ENCODE measurements at regions of chr22 and their contacts with region 1.

Region 1: DNA sequence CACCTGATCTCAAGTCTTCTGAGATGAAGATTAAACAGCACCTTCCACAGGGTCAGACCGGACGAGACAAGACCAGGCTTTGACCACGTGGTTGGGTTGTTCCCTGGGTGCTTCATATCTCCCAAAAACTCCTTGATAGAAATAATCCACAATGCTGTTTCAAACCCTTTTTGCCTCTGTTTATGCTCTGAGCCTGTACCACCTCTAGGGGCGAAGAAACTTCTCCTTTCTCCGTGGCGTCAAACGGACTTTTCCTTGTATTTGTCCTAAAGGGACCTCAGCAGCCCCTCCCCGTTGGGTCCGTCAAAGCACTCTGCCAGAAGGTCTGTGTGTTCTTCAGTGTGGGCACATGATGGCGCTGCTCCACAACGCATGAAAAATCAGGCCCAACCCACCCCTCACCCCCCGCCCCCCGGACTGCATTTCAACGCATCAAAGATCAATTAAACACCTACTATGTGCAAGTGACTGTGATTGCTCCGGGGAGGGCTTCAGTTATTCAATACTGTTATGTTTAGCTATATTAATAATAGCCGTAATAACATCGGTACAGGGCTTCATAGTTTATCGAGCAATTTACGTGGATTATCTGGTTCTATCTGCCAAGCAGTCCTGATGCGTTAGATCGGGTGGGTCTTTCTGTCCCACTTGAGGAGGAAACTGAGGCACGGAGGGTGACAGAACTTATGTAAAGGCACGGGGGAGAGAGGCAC is 17.3 kb upstream of the EIF3D start:
- DNase-seq: peak; percentile 75 to 80 (median 78)
- ATAC-seq: peak; percentile 93
- H3K4me3 ChIP-seq: no peak overlapping the region
- H3K27ac ChIP-seq: peak overlapping the region; percentile 62; the same call in 1 of the 3 replicates
- H3K4me1 ChIP-seq: peaks cover 5 to 15% of the 10 kb centered on the region in 2 experiments; a peak in 4 of 5 replicates
- H3K27me3 ChIP-seq: peaks cover 2 to 9% of the 10 kb centered on the region in 2 experiments; a peak in 3 of 5 replicates
- CTCF ChIP-seq: peak; percentile 61 to 68 (median 63); a peak in 5 of 6 replicates
- EP300 ChIP-seq: 0 out of 2 replicates have a peak, but pooled peaks have one; percentile 3
- POLR2A ChIP-seq: no peak
- RAD21 ChIP-seq: peak; percentile 31 to 51

Region 2: DNA sequence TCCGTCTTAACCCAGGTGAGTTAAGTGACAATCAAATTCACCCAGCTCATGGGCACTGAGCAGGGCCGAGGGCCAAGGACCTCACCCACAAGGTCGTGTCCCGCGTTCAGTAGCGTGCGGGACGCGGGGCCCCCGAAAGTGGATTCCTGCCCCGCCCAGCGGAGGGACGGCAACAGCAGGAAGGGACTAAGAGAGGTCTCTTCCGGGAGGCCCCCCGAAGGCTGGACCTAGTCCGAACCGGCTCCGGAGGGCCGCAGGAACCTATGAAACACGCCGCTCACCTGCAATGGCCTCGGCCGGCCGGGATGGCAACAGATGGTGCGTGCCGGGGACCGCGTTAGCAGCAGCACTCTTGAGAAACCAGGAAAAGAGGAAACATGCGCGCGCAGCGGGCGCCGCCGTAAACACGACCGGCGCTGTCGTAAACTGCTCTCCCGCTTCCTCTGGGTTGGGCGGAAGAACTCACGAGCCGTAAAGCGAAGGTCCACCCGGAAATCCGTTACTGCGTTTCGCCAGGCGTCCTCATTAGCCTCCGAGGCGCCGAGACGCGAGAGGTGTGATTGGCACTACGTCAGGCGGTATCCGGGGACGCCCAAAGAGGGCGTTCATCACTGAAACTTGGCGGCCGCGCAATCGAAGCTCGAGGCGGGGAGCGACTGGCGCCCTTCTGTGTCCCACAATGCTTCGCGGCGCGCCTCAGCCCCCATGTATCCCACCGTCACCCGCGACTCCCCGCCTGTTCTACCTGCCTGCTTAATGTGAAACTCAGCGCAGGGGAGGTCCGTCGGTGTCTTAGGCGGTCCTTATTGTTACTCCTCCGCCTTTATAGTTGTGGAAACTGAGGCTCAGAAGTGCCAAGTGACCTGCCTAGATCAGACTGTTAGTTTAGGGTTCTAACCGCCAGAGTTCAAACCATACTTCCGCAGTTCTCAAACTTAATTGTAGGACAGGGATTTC is 17.2 kb before region 1 on chr22 and contains the start of gene EIF3D:
- CTCF ChIA-PET with region 1: no interaction called
- POLR2A ChIA-PET with region 1: interaction called, 11 read pairs
- in situ Hi-C with region 1: no loop called
- intact Hi-C with region 1: no loop called
- DNase-seq: peak; percentile 78 to 98 (median 82)
- ATAC-seq: peak; percentile 96
- H3K4me3 ChIP-seq: peak within 1 kb of the TSS; percentile 99
- H3K27ac ChIP-seq: peak within 1 kb of the TSS; percentile 98
- H3K4me1 ChIP-seq: peaks cover 3 to 4% of the 10 kb centered on the region in 2 experiments; a peak in 3 of 5 replicates
- H3K27me3 ChIP-seq: no peaks in the 10 kb centered on the region
- CTCF ChIP-seq: peak in 2 of 3 experiments; percentile 8 to 14; a peak in 1 of 6 replicates
- EP300 ChIP-seq: no peak; the same call in 1 of the 2 replicates
- POLR2A ChIP-seq: peak; percentile 95
- RAD21 ChIP-seq: no peak
- polyA plus RNA-seq, gene EIF3D: 199 to 351 TPM

Region 3: DNA sequence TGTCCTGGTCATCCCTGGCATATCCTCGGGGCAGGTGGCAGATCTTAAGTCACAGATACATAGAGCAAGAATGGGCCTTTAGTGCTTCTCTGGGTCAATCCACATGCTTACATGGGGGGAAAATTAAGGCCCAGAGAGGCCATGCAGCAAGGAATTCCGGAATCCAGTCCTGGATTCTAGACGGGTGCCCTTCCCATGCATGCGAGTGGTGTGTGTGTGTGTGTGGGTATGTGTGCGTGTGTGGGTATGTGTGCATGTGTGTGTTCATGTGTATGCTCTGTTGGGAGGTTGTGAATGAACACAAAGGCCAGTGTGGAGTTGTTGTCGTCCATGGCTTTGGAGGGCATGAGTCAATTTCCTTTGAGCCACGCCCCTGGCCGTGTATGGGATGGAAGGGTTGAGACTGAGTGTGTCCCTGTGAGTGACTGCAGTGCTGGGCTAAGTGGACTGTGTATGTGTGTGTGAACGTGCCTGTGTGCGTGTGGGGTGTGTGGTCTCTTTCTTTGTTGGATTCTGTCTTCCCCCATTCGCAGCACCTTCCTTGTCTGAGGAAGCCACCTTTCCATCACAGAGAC is 16.1 kb after region 1 on chr22:
- CTCF ChIA-PET with region 1: no interaction called
- POLR2A ChIA-PET with region 1: no interaction called
- in situ Hi-C with region 1: no loop called
- intact Hi-C with region 1: no loop called
- DNase-seq: peak in 3 of 4 experiments; percentile 16 to 27 (median 20)
- ATAC-seq: peak; percentile 65
- H3K4me3 ChIP-seq: no peak overlapping the region
- H3K27ac ChIP-seq: no peak overlapping the region
- H3K4me1 ChIP-seq: peaks cover 0 to 12% of the 10 kb centered on the region in 2 experiments; a peak in 4 of 5 replicates
- H3K27me3 ChIP-seq: peaks cover 12 to 27% of the 10 kb centered on the region in 2 experiments; a peak in 3 of 5 replicates
- CTCF ChIP-seq: no peak
- EP300 ChIP-seq: no peak
- POLR2A ChIP-seq: no peak
- RAD21 ChIP-seq: no peak

Region 4: DNA sequence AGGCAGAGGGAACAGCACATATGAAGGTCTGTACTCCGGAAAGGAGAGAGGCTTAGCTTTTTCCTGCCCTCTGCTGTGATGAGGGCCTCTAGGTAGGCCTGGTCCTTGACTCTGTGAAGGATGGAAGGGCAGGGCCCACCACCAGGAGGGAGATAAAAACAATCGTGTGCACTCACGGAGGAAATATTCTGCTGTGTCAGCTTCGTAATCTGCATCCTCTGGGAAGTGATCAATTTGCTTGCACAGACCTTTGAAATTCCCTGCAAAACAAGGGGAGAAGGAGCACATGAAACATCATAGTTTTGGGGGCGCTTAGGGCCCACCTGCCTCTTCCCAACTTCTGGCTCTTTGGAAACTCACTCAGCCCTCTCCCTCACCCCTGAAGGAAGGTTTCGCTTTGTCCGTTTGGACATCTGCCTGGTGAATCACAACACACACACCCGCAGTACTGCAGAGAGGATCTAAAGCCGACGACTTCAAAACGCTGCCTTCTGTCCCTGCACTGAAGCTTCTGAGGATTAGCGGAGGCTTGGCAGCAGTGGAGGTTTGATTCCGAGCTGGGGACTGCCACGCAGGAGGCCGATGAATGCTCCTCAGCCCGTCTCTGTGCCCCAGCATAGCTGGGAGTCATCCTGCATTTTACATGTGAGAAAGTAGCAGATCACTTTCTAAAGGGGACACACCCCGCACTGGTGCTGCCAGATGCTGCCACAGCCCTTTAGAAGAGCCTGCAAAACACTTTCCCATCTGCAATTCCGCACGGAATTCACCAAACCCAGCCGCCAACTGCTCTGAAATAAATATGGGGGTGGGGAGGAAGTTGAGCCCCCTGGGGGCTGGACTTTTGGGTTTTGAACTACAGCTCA is 41.3 kb after region 1 on chr22:
- CTCF ChIA-PET with region 1: no interaction called
- POLR2A ChIA-PET with region 1: no interaction called
- in situ Hi-C with region 1: no loop called
- intact Hi-C with region 1: no loop called
- DNase-seq: no peak
- ATAC-seq: no peak
- H3K4me3 ChIP-seq: no peak overlapping the region
- H3K27ac ChIP-seq: no peak overlapping the region
- H3K4me1 ChIP-seq: no peaks in the 10 kb centered on the region; a peak in 1 of 5 replicates
- H3K27me3 ChIP-seq: peaks cover 17 to 51% of the 10 kb centered on the region in 2 experiments
- CTCF ChIP-seq: no peak
- EP300 ChIP-seq: no peak
- POLR2A ChIP-seq: no peak
- RAD21 ChIP-seq: no peak

Region 5: GRCh38 chr22:36773935-36774334 is 227.7 kb after region 1 on chr22:
- CTCF ChIA-PET with region 1: no interaction called
- POLR2A ChIA-PET with region 1: no interaction called
- in situ Hi-C with region 1: no loop called
- intact Hi-C with region 1: loop called (anchors 5 kb)
- DNase-seq: peak in 2 of 4 experiments; percentile 9 to 11
- ATAC-seq: no peak
- H3K4me3 ChIP-seq: no peak overlapping the region
- H3K27ac ChIP-seq: no peak overlapping the region
- H3K4me1 ChIP-seq: peaks cover 0 to 8% of the 10 kb centered on the region in 2 experiments; a peak in 1 of 5 replicates
- H3K27me3 ChIP-seq: peaks cover 0 to 38% of the 10 kb centered on the region in 2 experiments; a peak in 3 of 5 replicates
- CTCF ChIP-seq: peak; percentile 11 to 59 (median 34); a peak in 2 of 6 replicates
- EP300 ChIP-seq: no peak
- POLR2A ChIP-seq: no peak
- RAD21 ChIP-seq: peak in 1 of 2 experiments; percentile 48; a peak in 2 of 4 replicates

Region 6: DNA sequence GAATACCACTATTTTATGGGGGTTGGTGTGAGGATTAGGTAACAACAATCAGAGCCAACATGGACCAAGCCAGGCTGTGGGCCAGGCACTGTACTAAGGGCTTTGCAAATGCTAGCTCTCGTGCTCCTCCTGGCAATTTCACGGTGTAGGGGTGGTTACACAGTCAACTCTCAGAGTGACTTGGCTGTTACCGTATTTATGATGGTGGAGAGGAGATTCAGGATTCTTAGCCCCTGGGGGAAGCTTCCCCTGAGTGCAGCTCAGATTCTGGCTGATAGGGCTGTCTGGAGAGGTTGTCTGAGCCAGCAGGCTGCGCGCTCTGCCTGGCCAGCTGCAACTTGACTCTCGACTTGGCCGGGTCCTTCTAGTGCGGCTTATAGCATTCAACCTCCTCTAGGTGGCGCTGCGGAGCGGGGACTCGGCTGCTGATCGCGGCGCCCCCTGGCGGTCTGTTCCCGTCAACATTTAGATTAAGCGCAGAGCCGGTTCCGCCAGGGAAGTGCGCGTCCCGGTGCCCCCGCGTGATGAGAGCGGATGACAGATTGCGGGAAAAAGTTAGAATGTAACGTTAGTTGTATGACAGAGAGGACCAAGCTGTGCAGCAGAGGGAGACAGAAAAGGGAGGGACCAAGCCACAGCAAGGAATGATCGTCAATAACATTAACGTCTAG is 310.0 kb after region 1 on chr22:
- CTCF ChIA-PET with region 1: interaction called, 22 read pairs
- POLR2A ChIA-PET with region 1: interaction called, 3 read pairs
- in situ Hi-C with region 1: loop called (anchors 10 kb)
- intact Hi-C with region 1: loop called (anchors 1 kb)
- DNase-seq: peak; percentile 77 to 88 (median 77)
- ATAC-seq: peak; percentile 96
- H3K4me3 ChIP-seq: no peak overlapping the region
- H3K27ac ChIP-seq: no peak overlapping the region
- H3K4me1 ChIP-seq: peaks cover 0 to 12% of the 10 kb centered on the region in 2 experiments; a peak in 3 of 5 replicates
- H3K27me3 ChIP-seq: peaks cover 0 to 6% of the 10 kb centered on the region in 2 experiments; a peak in 1 of 5 replicates
- CTCF ChIP-seq: peak; percentile 99 to 100 (median 100)
- EP300 ChIP-seq: 0 out of 2 replicates have a peak, but pooled peaks have one; percentile 42
- POLR2A ChIP-seq: no peak
- RAD21 ChIP-seq: peak; percentile 79 to 84

Region 7: GRCh38 chr22:36977947-36978660 is 431.9 kb after region 1 on chr22:
- CTCF ChIA-PET with region 1: no interaction called
- POLR2A ChIA-PET with region 1: no interaction called
- in situ Hi-C with region 1: no loop called
- intact Hi-C with region 1: loop called (anchors 5 kb)
- DNase-seq: peak; percentile 85 to 88 (median 88)
- ATAC-seq: peak; percentile 80
- H3K4me3 ChIP-seq: peak overlapping the region; percentile 32
- H3K27ac ChIP-seq: no peak overlapping the region
- H3K4me1 ChIP-seq: peaks cover 25 to 34% of the 10 kb centered on the region in 2 experiments; a peak in 4 of 5 replicates
- H3K27me3 ChIP-seq: no peaks in the 10 kb centered on the region; a peak in 1 of 5 replicates
- CTCF ChIP-seq: peak; percentile 82 to 86 (median 83)
- EP300 ChIP-seq: no peak
- POLR2A ChIP-seq: no peak
- RAD21 ChIP-seq: peak; percentile 70 to 79

Measured in K562 (cell line).